H1 (cell line): ENCODE measurements at regions of chr11 and their contacts with region 1.

Region 1: DNA sequence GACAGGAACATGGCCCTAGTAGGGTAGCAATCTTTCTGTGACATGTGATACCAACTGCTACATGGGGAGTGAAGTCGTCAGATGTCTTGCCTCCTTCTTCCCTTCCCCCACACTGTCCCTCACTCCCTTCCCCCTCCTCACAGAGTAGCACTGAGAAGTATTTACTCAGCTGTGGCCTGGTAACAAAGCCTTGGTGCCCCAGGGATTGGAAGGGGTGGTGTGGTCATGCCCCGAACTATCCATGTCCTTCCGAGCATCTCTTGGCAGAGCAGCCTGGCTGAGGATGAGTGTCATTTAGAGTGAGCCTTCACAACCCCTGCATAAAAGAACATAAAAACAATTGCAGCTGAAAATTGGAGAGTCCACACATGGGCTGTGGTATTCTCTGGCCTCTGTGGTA is 46.1 kb downstream of the ARFGAP2 start:
- DNase-seq: no peak
- H3K4me3 ChIP-seq: peak overlapping the region in 1 of 4 experiments; percentile 22; a peak in 1 of 8 replicates
- H3K27ac ChIP-seq: no peak overlapping the region
- H3K4me1 ChIP-seq: peaks cover 2 to 13% (median 7%) of the 10 kb centered on the region in 4 experiments; a peak in 5 of 7 replicates
- H3K27me3 ChIP-seq: no peaks in the 10 kb centered on the region
- CTCF ChIP-seq: no peak
- EP300 ChIP-seq: peak in 1 of 2 experiments; percentile 77; a peak in 1 of 3 replicates
- POLR2A ChIP-seq: no peak
- RAD21 ChIP-seq: no peak

Region 2: GRCh38 chr11:47104261-47104950 is 26.1 kb before region 1 on chr11:
- CTCF ChIA-PET with region 1: interaction called, 10 read pairs
- POLR2A ChIA-PET with region 1: interaction called, 3 read pairs
- DNase-seq: peak in 1 of 2 experiments; percentile 9
- H3K4me3 ChIP-seq: no peak overlapping the region
- H3K27ac ChIP-seq: peak overlapping the region; percentile 36
- H3K4me1 ChIP-seq: peaks cover 6 to 16% (median 7%) of the 10 kb centered on the region in 4 experiments; a peak in 6 of 7 replicates
- H3K27me3 ChIP-seq: no peaks in the 10 kb centered on the region
- CTCF ChIP-seq: no peak
- EP300 ChIP-seq: no peak
- POLR2A ChIP-seq: no peak
- RAD21 ChIP-seq: no peak

Region 3: GRCh38 chr11:47204637-47204989 is 74.1 kb after region 1 on chr11:
- CTCF ChIA-PET with region 1: no interaction called
- POLR2A ChIA-PET with region 1: no interaction called
- DNase-seq: no peak
- H3K4me3 ChIP-seq: no peak overlapping the region
- H3K27ac ChIP-seq: 0 out of 2 replicates have a peak overlapping the region, but pooled peaks have one; percentile 42
- H3K4me1 ChIP-seq: peaks cover 2 to 7% (median 5%) of the 10 kb centered on the region in 4 experiments; a peak in 6 of 7 replicates
- H3K27me3 ChIP-seq: no peaks in the 10 kb centered on the region
- CTCF ChIP-seq: no peak
- EP300 ChIP-seq: no peak
- POLR2A ChIP-seq: no peak
- RAD21 ChIP-seq: no peak